GM12878 (cell line): ENCODE measurements at regions of chrX and their contacts with region 1.

Region 1: GRCh38 chrX:135543924-135544323 is 23.5 kb downstream of the INTS6L start:
- DNase-seq: no peak
- ATAC-seq: peak; percentile 85
- H3K4me3 ChIP-seq: no peak overlapping the region
- H3K27ac ChIP-seq: no peak overlapping the region
- H3K4me1 ChIP-seq: no peaks in the 10 kb centered on the region
- H3K27me3 ChIP-seq: no peaks in the 10 kb centered on the region
- CTCF ChIP-seq: peak; percentile 31 to 44 (median 36); a peak in 5 of 6 replicates
- EP300 ChIP-seq: no peak
- POLR2A ChIP-seq: no peak
- RAD21 ChIP-seq: peak; percentile 31; the same call in 1 of the 2 replicates

Region 2: DNA sequence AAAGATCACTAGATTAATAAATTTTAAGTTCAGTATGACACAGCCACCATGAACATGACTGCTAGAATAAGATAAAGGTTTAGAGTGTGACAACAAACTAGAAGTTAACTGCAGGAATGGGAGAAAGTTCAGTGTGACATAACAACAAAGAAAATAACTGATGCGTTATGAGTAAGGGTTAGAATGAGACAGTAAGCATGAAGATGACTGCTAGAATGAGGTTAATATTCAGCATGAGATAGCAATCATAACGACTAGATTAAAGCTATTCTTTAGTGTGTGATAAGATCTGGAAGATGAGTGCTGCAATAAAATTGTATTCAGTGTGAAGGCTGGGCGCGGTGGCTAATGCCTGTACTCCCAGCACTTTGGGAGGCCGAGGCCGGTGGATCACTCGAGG is 170.6 kb before region 1 on chrX:
- CTCF ChIA-PET with region 1: no interaction called
- POLR2A ChIA-PET with region 1: no interaction called
- RAD21 ChIA-PET with region 1: no interaction called
- SMC1A ChIA-PET with region 1: no interaction called
- in situ Hi-C with region 1: no loop called
- intact Hi-C with region 1: no loop called
- DNase-seq: no peak
- ATAC-seq: no peak
- H3K4me3 ChIP-seq: no peak overlapping the region
- H3K27ac ChIP-seq: no peak overlapping the region
- H3K4me1 ChIP-seq: no peaks in the 10 kb centered on the region
- H3K27me3 ChIP-seq: no peaks in the 10 kb centered on the region
- CTCF ChIP-seq: no peak
- EP300 ChIP-seq: no peak
- POLR2A ChIP-seq: no peak
- RAD21 ChIP-seq: no peak

Region 3: DNA sequence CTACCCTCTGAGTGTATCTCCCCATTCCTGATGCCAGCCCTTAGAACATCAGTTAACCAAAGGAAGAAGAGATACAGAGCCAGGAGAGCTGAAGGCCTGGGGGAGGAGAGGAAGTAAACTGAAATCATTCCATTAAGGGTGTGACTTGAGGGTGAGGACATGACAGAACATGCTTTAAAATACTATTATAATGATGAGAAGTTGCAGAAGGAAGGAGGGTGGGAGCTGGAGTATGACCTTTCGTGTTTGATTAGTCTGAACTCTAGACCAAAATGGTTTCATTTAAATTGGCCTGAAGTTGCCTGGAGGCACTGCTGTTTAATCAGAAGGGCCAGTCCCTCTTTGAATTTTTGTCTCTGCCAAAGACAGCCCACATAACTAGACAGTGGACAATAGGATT is 12.1 kb before region 1 on chrX:
- CTCF ChIA-PET with region 1: interaction called, 20 read pairs
- POLR2A ChIA-PET with region 1: interaction called, 8 read pairs
- RAD21 ChIA-PET with region 1: interaction called, 5 read pairs
- SMC1A ChIA-PET with region 1: interaction called, 5 read pairs
- in situ Hi-C with region 1: no loop called
- intact Hi-C with region 1: no loop called
- DNase-seq: no peak
- ATAC-seq: no peak
- H3K4me3 ChIP-seq: no peak overlapping the region
- H3K27ac ChIP-seq: no peak overlapping the region
- H3K4me1 ChIP-seq: no peaks in the 10 kb centered on the region
- H3K27me3 ChIP-seq: no peaks in the 10 kb centered on the region
- CTCF ChIP-seq: no peak
- EP300 ChIP-seq: no peak
- POLR2A ChIP-seq: no peak
- RAD21 ChIP-seq: no peak

Region 4: DNA sequence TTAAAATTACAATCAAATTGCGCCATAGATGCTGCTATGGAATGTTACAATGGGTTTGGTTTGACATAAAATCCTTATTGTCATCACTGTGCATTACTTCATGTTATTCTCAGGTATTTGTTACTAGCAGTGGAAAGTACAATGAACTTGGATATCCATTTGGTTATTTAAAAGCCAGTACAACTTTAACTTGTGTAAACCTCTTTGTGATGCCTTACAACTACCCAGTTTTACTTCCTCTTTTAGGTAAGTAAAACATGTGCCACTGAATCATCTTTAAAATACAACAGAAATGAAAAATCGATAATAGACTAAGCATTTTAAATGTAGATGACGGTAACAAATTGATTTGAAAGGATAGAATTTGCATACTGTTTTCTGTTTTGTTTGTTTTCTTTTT is 12.1 kb after region 1 on chrX:
- CTCF ChIA-PET with region 1: interaction called, 15 read pairs
- POLR2A ChIA-PET with region 1: no interaction called
- RAD21 ChIA-PET with region 1: no interaction called
- SMC1A ChIA-PET with region 1: interaction called, 5 read pairs
- in situ Hi-C with region 1: no loop called
- intact Hi-C with region 1: no loop called
- DNase-seq: no peak
- ATAC-seq: peak; percentile 89
- H3K4me3 ChIP-seq: no peak overlapping the region
- H3K27ac ChIP-seq: no peak overlapping the region; the same call in 1 of the 2 replicates
- H3K4me1 ChIP-seq: peaks cover 6% of the 10 kb centered on the region; the same call in 1 of the 2 replicates
- H3K27me3 ChIP-seq: no peaks in the 10 kb centered on the region
- CTCF ChIP-seq: no peak
- EP300 ChIP-seq: no peak
- POLR2A ChIP-seq: no peak
- RAD21 ChIP-seq: no peak

Region 5: GRCh38 chrX:135572436-135572835 is 28.5 kb after region 1 on chrX:
- CTCF ChIA-PET with region 1: interaction called, 13 read pairs
- POLR2A ChIA-PET with region 1: no interaction called
- RAD21 ChIA-PET with region 1: interaction called, 3 read pairs
- SMC1A ChIA-PET with region 1: interaction called, 14 read pairs
- in situ Hi-C with region 1: no loop called
- intact Hi-C with region 1: no loop called
- DNase-seq: no peak
- ATAC-seq: no peak
- H3K4me3 ChIP-seq: no peak overlapping the region
- H3K27ac ChIP-seq: no peak overlapping the region
- H3K4me1 ChIP-seq: no peaks in the 10 kb centered on the region
- H3K27me3 ChIP-seq: no peaks in the 10 kb centered on the region
- CTCF ChIP-seq: peak in 2 of 3 experiments; percentile 20 to 27; a peak in 3 of 6 replicates
- EP300 ChIP-seq: no peak
- POLR2A ChIP-seq: no peak
- RAD21 ChIP-seq: peak; percentile 38; the same call in 1 of the 2 replicates